Activated CD4-positive, alpha-beta T cell treated with anti-CD3 and anti-CD28 coated beads for 36 hours (primary cell): ENCODE measurements at regions of chr1 and their contacts with region 1.

Region 1: DNA sequence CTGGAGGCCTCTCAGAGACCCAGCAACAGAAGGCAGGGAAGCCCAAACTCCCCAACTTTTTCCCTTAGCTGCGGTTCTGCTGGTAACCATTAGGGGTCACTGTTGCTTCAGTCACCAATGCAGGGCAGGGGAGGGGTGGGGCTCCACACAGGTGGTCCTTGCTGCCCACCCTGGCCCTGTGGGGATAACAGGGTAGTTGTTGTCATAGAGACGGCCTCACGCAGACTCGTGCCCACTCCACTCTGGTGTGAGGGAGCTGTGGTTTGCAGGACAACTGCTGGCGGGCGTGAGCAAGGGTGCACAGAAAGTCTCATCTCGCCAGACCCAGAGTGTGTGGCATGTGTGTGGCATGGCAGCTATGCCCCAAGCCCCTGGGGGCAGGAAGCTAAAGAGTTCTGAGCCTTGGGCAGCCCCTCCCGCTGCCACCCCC is 19.9 kb downstream of the INSRR start:
- DNase-seq: peak; percentile 63
- ATAC-seq: peak; percentile 49
- H3K4me3 Mint-ChIP-seq: no peak overlapping the region
- H3K27ac Mint-ChIP-seq: no peak overlapping the region
- H3K4me1 Mint-ChIP-seq: peaks cover 33% of the 10 kb centered on the region
- H3K27me3 Mint-ChIP-seq: peaks cover 25% of the 10 kb centered on the region

Region 2: DNA sequence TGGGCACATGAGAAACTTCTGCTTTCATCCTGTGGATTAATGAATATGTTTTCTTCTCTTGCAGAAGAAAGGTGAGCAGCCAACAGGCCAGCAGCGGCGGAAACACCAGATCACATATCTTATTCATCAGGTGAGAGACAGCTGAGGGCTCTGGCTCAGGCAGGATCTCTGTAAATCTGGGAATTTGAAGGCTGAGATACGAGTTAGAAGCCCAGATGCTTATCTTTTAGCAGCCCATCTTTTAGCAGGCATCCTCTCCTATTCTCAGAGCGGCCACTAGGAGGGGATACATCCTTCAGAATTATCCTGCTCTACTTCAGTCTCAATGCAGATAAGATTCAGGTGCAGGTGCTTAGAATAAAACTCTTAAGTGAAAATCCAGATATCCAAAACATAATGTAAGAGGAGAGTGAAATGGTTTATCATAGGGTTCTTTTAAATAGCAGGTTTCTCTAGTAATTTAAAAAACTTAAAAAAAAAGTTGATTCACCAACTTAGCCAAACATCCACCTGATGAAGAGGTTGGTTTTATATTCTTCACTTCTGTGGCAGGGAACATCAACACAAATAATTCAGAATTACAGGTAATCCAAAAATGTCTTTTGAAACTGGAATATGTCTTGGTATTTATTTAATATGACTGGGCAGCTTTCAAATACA is 41.7 kb before region 1 on chr1:
- CTCF ChIA-PET with region 1: interaction called, 7 read pairs
- POLR2A ChIA-PET with region 1: interaction called, 4 read pairs
- intact Hi-C with region 1: loop called in 1 of 2 experiments (anchors 2 kb)
- DNase-seq: peak; percentile 75
- ATAC-seq: peak; percentile 84
- H3K4me3 Mint-ChIP-seq: no peak overlapping the region
- H3K27ac Mint-ChIP-seq: no peak overlapping the region
- H3K4me1 Mint-ChIP-seq: peaks cover 7% of the 10 kb centered on the region
- H3K27me3 Mint-ChIP-seq: no peaks in the 10 kb centered on the region

Region 3: DNA sequence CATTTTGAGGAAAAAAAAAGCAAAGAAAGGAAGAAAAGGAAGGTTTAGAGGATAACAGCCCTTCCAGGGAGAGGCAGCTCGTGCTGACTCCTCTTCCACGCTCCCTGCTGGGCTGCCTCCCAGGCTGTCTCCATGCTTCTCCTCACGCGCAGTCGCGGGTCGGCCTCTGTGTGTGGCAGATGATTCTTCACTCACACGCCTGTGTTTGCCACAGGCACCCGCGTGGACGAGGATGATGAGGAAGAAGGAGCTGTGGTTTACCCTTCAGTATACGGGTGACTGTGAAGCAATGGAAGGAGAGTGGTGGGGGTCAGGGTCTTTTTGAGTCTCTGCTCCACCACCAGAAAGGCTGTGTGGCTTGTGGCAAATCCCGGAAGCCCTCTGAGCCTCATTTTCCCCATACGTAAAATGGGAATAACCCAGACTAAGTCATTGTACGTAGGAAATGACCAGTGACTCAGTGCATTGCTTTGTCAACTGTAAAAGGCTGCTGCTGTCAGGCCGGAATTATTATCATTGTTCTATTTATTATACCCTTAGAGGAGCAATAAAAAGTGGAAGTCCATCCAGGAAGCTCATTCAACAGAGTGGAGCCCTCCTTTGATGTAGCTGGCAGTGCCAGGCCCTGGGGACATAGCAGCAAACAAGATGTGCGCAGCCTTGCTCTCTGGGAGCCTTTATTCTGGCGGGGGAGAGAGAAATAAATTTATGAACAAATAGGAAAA is 10.4 kb before region 1 on chr1:
- CTCF ChIA-PET with region 1: interaction called, 26 read pairs
- POLR2A ChIA-PET with region 1: no interaction called
- intact Hi-C with region 1: no loop called
- DNase-seq: no peak
- ATAC-seq: peak; percentile 30
- H3K4me3 Mint-ChIP-seq: no peak overlapping the region
- H3K27ac Mint-ChIP-seq: no peak overlapping the region
- H3K4me1 Mint-ChIP-seq: peaks cover under 1% of the 10 kb centered on the region
- H3K27me3 Mint-ChIP-seq: peaks cover 7% of the 10 kb centered on the region

Region 4: GRCh38 chr1:156860113-156860627 is 21.2 kb after region 1 on chr1:
- CTCF ChIA-PET with region 1: interaction called, 84 read pairs
- POLR2A ChIA-PET with region 1: no interaction called
- intact Hi-C with region 1: loop called (anchors 1 to 2 kb)
- DNase-seq: peak; percentile 77
- ATAC-seq: peak; percentile 47
- H3K4me3 Mint-ChIP-seq: peak overlapping the region; percentile 56
- H3K27ac Mint-ChIP-seq: no peak overlapping the region
- H3K4me1 Mint-ChIP-seq: peaks cover 25% of the 10 kb centered on the region
- H3K27me3 Mint-ChIP-seq: peaks cover 45% of the 10 kb centered on the region

Region 5: GRCh38 chr1:156927215-156928042 is 88.4 kb after region 1 on chr1:
- CTCF ChIA-PET with region 1: interaction called, 5 read pairs
- POLR2A ChIA-PET with region 1: no interaction called
- intact Hi-C with region 1: loop called in 1 of 2 experiments (anchors 2 kb)
- DNase-seq: peak; percentile 87
- ATAC-seq: peak; percentile 76
- H3K4me3 Mint-ChIP-seq: no peak overlapping the region
- H3K27ac Mint-ChIP-seq: no peak overlapping the region
- H3K4me1 Mint-ChIP-seq: peaks cover 25% of the 10 kb centered on the region
- H3K27me3 Mint-ChIP-seq: peaks cover 64% of the 10 kb centered on the region